H1 (cell line): ENCODE measurements at regions of chr11 and their contacts with region 1.

Region 1: GRCh38 chr11:15074206-15075161 is 1.1 kb downstream of the CALCB start:
- DNase-seq: peak; percentile 73 to 98
- H3K4me3 ChIP-seq: peak overlapping the region; percentile 40 to 68 (median 56)
- H3K27ac ChIP-seq: no peak overlapping the region; the same call in 1 of the 2 replicates
- H3K4me1 ChIP-seq: peaks cover 0 to 4% (median under 1%) of the 10 kb centered on the region in 4 experiments; a peak in 2 of 7 replicates
- H3K27me3 ChIP-seq: peaks cover 4 to 24% (median 20%) of the 10 kb centered on the region in 4 experiments
- CTCF ChIP-seq: peak; percentile 78 to 93 (median 90)
- EP300 ChIP-seq: no peak
- POLR2A ChIP-seq: no peak
- RAD21 ChIP-seq: peak; percentile 81 to 86

Region 2: GRCh38 chr11:14812757-14813156 is 261.7 kb before region 1 on chr11:
- CTCF ChIA-PET with region 1: no interaction called
- POLR2A ChIA-PET with region 1: no interaction called
- DNase-seq: no peak
- H3K4me3 ChIP-seq: no peak overlapping the region
- H3K27ac ChIP-seq: no peak overlapping the region
- H3K4me1 ChIP-seq: no peaks in the 10 kb centered on the region
- H3K27me3 ChIP-seq: no peaks in the 10 kb centered on the region
- CTCF ChIP-seq: no peak
- EP300 ChIP-seq: no peak
- POLR2A ChIP-seq: no peak
- RAD21 ChIP-seq: no peak

Region 3: GRCh38 chr11:15038963-15039362 is 35.5 kb before region 1 on chr11:
- CTCF ChIA-PET with region 1: interaction called, 64 read pairs
- POLR2A ChIA-PET with region 1: no interaction called
- DNase-seq: no peak
- H3K4me3 ChIP-seq: no peak overlapping the region
- H3K27ac ChIP-seq: no peak overlapping the region
- H3K4me1 ChIP-seq: peaks cover 2 to 9% (median 5%) of the 10 kb centered on the region in 4 experiments; a peak in 4 of 7 replicates
- H3K27me3 ChIP-seq: no peaks in the 10 kb centered on the region
- CTCF ChIP-seq: peak in 2 of 3 experiments; percentile 22 to 48; a peak in 3 of 4 replicates
- EP300 ChIP-seq: no peak
- POLR2A ChIP-seq: no peak
- RAD21 ChIP-seq: peak; percentile 61 to 65

Region 4: GRCh38 chr11:15055620-15056356 is 18.7 kb before region 1 on chr11:
- CTCF ChIA-PET with region 1: interaction called, 22 read pairs
- POLR2A ChIA-PET with region 1: no interaction called
- DNase-seq: no peak
- H3K4me3 ChIP-seq: no peak overlapping the region
- H3K27ac ChIP-seq: no peak overlapping the region
- H3K4me1 ChIP-seq: no peaks in the 10 kb centered on the region
- H3K27me3 ChIP-seq: no peaks in the 10 kb centered on the region
- CTCF ChIP-seq: no peak
- EP300 ChIP-seq: no peak
- POLR2A ChIP-seq: no peak
- RAD21 ChIP-seq: no peak

Region 5: DNA sequence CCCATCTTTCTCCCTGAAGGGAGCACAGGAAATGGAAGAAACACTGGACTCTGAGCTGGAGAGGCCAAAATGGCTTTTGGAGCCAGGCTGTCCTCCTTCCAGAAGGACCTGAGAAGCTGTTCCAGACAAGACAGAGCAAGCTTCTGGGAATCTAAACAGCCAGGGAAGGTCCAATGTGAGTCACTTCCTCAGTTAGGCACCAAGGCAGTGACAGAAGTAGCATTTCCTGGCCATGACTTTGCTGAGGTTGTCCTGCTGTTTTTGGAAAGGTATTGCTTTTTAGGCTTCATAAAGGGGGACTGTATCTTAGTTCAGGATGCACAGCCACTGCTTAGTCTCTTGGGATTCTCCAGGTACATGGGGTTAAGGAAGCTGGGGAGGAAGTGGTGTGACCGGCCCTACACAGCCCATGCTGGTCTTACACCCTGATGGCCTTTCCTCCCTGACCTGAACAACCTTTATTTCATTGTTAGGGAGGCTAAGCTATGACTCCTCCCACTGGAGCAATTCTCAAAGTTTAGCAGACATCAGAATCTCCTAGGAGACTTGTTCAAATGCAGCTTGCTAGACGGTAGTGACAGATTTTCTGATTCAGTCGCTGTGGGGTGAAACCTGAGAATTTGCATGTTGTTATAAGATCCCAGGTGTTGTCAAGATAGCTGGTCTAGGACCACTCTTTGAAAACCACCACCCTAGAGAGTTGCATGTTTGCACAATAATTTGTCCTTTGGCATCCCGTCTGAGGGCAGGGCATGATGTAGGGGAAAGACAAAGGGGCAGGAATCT is 33.4 kb after region 1 on chr11:
- CTCF ChIA-PET with region 1: interaction called, 12 read pairs
- POLR2A ChIA-PET with region 1: no interaction called
- DNase-seq: no peak
- H3K4me3 ChIP-seq: no peak overlapping the region
- H3K27ac ChIP-seq: no peak overlapping the region
- H3K4me1 ChIP-seq: no peaks in the 10 kb centered on the region
- H3K27me3 ChIP-seq: no peaks in the 10 kb centered on the region
- CTCF ChIP-seq: no peak
- EP300 ChIP-seq: no peak
- POLR2A ChIP-seq: no peak
- RAD21 ChIP-seq: no peak

Region 6: DNA sequence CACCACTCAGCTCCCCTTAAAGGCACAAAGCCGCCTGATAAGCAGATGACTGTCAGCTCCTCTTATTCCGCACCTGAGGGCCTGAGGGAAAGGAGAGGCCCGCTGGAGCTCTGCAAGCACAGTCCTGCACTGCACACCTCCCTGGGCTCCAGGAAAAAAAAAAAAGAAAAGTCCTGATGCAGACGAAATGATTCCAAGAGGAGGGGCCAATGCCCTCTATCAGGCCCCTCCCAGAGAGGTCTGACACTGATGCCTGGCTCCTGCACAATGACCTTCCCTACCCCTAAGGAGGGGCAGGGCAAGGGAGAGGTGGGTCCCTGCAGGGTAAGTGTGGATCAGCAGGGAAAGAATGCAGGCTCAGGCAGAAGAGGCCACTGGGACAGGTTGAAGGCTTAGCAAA is 709.1 kb after region 1 on chr11:
- CTCF ChIA-PET with region 1: no interaction called
- POLR2A ChIA-PET with region 1: no interaction called
- DNase-seq: no peak
- H3K4me3 ChIP-seq: no peak overlapping the region
- H3K27ac ChIP-seq: no peak overlapping the region
- H3K4me1 ChIP-seq: peaks cover 0 to 4% (median 0%) of the 10 kb centered on the region in 4 experiments; a peak in 2 of 7 replicates
- H3K27me3 ChIP-seq: no peaks in the 10 kb centered on the region
- CTCF ChIP-seq: no peak
- EP300 ChIP-seq: no peak
- POLR2A ChIP-seq: no peak
- RAD21 ChIP-seq: no peak